Gastrocnemius medialis (tissue), 4 donors: ENCODE measurements at regions of chr15 and their contacts with region 1.

Region 1: DNA sequence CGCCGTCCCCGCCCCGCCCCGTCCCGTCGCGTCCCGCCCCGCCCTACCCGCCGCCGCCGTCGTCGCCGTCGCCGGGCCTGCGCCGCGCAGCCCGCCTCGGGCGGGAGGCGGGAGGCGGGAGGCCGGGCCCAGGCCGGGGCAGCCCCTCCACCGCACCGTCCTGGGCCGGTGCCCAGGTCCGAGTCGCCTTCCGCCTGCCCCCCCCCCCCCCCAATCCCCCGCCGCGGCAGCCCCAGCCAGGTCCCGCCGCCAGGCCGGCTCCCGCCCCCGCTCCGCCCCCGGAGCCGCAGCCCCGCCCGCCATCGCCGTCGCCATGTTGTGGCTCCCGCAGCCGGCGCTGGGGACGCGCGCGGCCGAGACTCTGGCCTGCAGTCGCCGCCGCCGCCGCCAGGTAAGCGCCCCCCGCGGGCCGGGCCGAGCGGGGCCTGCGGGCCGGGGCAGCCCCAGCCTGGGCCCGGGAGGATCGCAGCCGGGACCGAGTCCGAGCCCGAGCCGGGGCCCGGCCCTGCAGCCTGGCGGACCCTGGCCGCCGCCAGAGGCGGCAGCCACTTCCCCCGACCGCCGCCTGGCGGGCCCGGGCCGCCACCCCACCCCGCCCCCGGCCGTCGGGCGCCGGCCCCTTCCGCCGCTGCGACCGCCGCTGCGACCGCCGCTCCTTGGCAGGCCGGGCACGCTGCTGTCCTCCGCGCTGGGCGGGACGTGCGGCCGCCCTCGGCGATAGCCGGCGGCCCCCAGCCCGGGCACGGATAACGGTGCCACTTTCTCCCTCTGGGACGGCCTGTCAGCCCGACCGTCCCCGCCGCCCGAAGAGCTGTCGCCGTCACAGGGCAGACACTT is at the start of gene ZNF592:
- DNase-seq: peak; percentile 64 to 83
- ATAC-seq: peak; percentile 63 to 70
- H3K4me3 ChIP-seq: peak within 1 kb of the TSS; percentile 83 to 96 (median 91)
- H3K27ac ChIP-seq: peak within 1 kb of the TSS; percentile 98 to 100 (median 100)
- H3K4me1 ChIP-seq: peaks cover 64 to 65% of the 10 kb centered on the region in 2 donors
- H3K27me3 ChIP-seq: no peaks in the 10 kb centered on the region
- CTCF ChIP-seq: peak in 4 of 5 experiments; percentile 64 to 85 (median 68)
- POLR2A ChIP-seq: peak; percentile 82 to 84
- total RNA-seq, gene ZNF592: 30.0 to 49.2 (median 33.8) TPM

Region 2: DNA sequence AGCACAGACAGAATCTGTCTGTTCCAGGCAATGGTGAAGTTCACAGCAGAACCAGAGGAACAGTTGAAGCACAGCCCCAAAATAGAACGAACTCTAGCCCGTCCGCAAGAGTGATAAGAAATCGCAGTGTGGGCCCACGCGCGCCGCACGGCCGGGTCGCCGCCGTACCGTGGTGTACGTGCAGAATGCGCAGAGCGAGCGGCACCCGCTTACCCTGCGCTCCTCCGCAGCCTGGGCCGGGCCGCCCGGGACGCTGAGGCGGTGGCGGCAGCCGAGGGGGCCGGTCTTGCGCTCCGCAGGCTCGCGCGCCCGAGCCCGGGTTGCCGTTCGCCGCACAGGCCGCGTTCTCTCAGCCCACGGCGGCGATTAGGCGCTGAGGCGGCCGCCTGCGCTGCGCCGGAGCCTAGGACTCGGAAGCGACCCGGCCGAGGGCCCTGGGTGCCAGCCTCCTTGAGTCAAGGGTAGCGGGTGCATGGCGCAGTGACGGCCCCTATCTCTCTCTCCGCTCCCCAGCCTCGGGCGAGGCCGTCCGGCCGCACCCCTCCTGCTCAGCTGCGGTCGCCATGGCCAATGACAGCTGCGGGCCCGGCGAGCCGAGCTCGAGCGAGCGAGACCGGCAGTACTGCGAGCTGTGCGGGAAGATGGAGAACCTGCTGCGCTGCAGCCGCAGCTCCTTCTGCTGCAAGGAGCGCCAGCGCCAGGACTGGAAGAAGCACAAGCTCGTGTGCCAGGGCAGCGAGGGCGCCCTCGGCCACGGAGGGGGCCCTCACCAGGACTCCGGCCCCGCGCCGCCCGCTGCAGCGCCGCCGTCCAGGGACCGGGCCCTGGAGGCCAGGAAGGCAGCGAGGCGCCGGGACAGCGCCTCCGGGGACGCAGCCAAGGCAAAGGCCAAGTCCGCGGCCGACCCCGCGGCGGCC is 114.9 kb before region 1 on chr15:
- in situ Hi-C with region 1: no loop called
- intact Hi-C with region 1: loop called (anchors 2 kb)
- DNase-seq: peak; percentile 36 to 61
- ATAC-seq: peak; percentile 66 to 67
- H3K4me3 ChIP-seq: peak overlapping the region; percentile 64 to 85 (median 76)
- H3K27ac ChIP-seq: peak overlapping the region; percentile 83 to 97 (median 92)
- H3K4me1 ChIP-seq: peaks cover 40 to 41% of the 10 kb centered on the region in 2 donors
- H3K27me3 ChIP-seq: no peaks in the 10 kb centered on the region
- CTCF ChIP-seq: peak in 1 of 5 experiments; percentile 19
- POLR2A ChIP-seq: peak; percentile 22 to 34

Region 3: DNA sequence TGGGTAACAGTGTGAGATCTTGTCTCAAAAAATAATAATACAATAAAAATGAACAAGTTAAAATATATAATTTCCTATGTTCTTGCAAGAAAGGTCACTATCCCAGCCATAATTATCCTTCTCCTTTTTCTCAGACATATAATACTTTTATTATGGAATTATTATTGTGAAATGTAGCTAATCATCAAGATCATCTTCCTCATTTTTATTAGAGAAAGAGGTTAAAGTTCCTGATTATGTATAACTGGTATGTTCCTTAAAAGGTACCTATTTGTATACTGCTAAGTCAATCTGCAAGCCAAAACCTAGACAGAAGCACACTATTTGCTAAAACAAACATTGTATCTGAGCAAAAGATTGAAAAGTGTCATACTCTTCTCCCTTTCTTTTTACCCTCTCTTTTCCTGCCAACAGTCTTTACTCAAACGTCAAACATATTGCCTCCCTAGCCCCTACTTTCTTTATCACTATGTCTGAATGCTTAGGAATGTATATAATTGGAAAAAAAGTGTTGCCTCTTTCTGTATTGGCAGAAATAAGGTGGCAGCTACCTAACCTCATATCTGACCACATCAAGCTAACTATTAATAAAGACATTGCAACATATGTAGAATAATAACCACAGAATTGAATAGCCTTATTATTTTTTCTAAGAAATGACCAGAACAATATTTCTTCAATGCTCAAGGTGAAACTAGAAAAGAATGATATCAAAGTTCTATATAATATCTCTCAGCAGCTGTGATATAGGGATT is 51.1 kb before region 1 on chr15:
- in situ Hi-C with region 1: no loop called
- intact Hi-C with region 1: no loop called
- DNase-seq: no peak
- ATAC-seq: no peak
- H3K4me3 ChIP-seq: no peak overlapping the region
- H3K27ac ChIP-seq: no peak overlapping the region
- H3K4me1 ChIP-seq: peaks cover 4 to 14% of the 10 kb centered on the region in 2 donors
- H3K27me3 ChIP-seq: no peaks in the 10 kb centered on the region
- CTCF ChIP-seq: no peak
- POLR2A ChIP-seq: no peak

Region 4: DNA sequence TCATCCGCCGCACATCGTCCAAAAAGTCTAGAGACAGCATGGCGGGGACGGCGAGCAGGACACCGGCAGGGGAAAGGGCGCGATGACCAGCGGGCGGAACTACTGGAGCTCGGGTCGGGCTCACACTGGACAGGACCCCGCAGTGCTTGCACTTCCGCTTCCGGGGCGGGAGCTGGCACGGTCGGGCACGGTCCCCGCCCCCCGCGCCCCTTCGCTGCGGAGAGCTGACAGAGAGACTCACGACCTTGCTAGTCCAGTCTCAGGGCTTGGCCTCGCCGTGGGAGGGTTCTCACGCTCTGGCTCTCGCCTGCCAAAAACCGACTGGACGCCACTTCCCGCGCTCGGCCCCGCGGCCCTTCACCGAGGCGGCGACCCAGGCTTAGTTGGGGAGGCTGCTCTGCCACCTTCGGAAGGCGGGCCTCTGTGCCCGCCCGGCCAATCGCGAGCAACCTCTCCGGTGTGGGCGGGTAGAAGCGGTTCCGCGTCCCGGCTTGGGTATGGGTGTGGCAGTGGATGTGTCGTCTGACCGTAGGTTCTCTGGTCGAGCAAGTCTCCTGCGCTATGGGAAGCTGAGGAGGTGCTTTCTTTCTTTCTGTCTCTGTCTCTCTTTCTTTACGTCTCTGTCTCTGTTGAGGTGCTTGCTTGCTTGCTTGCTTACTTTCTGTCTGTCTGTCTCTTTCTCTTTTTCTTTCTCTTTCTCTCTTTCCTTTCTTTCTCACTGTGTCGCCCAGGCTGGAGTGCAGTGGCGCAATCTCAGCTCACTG is 32.3 kb before region 1 on chr15 and contains the start of gene SEC11A:
- in situ Hi-C with region 1: no loop called
- intact Hi-C with region 1: loop called (anchors 1 kb)
- DNase-seq: peak; percentile 95
- ATAC-seq: peak; percentile 95
- H3K4me3 ChIP-seq: peak within 1 kb of the TSS; percentile 87 to 94 (median 90)
- H3K27ac ChIP-seq: peak within 1 kb of the TSS; percentile 95 to 97 (median 96)
- H3K4me1 ChIP-seq: peaks cover 29 to 30% of the 10 kb centered on the region in 2 donors
- H3K27me3 ChIP-seq: no peaks in the 10 kb centered on the region
- CTCF ChIP-seq: no peak
- POLR2A ChIP-seq: peak; percentile 72 to 80
- total RNA-seq, gene SEC11A: 90.2 to 127 (median 118) TPM

Region 5: GRCh38 chr15:84818261-84819131 is 70.0 kb after region 1 on chr15:
- in situ Hi-C with region 1: loop called in 1 of 4 experiments (anchors 10 kb)
- intact Hi-C with region 1: loop called (anchors 1 kb)
- DNase-seq: peak; percentile 88 to 89
- ATAC-seq: peak; percentile 75 to 79
- H3K4me3 ChIP-seq: peak overlapping the region; percentile 71 to 97 (median 82)
- H3K27ac ChIP-seq: peak overlapping the region; percentile 94 to 99 (median 96)
- H3K4me1 ChIP-seq: peaks cover 46 to 64% of the 10 kb centered on the region in 2 donors
- H3K27me3 ChIP-seq: no peaks in the 10 kb centered on the region
- CTCF ChIP-seq: peak in 2 of 5 experiments; percentile 19 to 20
- POLR2A ChIP-seq: peak; percentile 82 to 90